Mucosa of descending colon (tissue), 3 donors: ENCODE measurements at regions of chr3 and their contacts with region 1.

Region 1: GRCh38 chr3:117059067-117059955 is 349.7 kb downstream of the TUSC7 start:
- DNase-seq: peak in 1 of 3 donors; percentile 15
- ATAC-seq: no peak
- H3K4me3 ChIP-seq: no peak overlapping the region
- H3K4me1 ChIP-seq: no peaks in the 10 kb centered on the region
- CTCF ChIP-seq: no peak

Region 2: DNA sequence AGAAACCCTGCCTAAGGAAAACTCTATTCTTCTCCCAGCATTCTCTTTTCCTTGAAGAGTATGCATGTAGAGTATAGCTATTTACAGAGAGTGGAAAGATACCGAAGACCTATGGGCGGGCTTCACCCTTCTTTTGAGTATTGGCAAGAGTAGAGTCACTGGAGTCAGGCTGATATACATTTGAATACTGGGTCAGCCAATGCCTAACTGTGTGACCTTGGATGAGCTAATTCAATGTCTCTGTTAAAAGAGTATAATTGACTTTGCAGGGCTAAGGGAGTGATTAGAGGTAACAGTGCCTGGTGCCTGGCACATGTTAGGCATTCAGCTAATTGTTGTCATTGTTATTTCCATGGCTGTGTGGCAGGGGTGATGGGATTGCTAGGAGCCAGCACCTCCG is 274.1 kb before region 1 on chr3:
- intact Hi-C with region 1: no loop called
- DNase-seq: no peak
- ATAC-seq: no peak
- H3K4me3 ChIP-seq: no peak overlapping the region
- H3K4me1 ChIP-seq: no peaks in the 10 kb centered on the region
- CTCF ChIP-seq: no peak

Region 3: DNA sequence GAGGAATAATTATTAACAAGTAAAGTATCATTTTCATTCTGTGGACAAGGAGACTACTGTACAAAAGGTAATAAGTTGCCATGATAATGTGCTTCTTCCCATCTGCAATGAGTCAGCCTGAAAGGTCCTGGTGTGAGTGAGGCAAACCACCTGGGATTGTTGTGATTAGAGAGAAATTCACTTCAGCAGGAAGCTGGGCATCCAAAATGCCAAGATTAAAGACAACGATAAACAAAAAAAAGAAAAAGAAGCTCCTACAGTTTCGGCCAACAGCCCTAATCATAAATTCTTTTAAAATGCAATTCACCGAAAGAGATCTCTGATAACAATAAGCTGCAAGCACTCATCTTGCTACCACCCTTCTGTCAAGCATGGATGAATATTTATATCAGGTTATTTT is 158.0 kb after region 1 on chr3:
- intact Hi-C with region 1: no loop called
- DNase-seq: no peak
- ATAC-seq: no peak
- H3K4me3 ChIP-seq: no peak overlapping the region
- H3K4me1 ChIP-seq: no peaks in the 10 kb centered on the region
- CTCF ChIP-seq: no peak

Region 4: DNA sequence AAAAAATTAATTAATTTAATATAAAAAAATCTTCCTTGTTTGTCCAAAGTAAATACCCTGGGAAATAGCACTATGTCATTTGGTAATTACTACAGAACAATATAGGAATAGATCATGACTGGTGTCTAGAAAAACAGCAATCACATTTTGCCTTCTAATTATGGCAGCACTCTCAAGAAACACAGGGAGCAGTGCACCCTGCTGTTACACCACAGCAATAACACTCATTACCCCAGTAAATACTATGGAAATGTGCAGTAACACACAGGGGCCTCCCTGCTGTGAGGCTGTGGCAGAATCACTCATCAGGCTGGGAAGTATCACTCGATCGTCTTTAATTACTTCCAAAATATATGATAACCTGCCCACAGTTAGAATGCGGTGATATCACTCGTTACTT is 296.3 kb after region 1 on chr3:
- intact Hi-C with region 1: loop called in 1 of 2 experiments (anchors 5 kb)
- DNase-seq: peak in 1 of 3 donors; percentile 28
- ATAC-seq: peak; percentile 81
- H3K4me3 ChIP-seq: no peak overlapping the region
- H3K4me1 ChIP-seq: no peaks in the 10 kb centered on the region
- CTCF ChIP-seq: no peak